Dorsolateral prefrontal cortex (tissue), 120 donors: ENCODE measurements at regions of chr2 and their contacts with region 1.

Region 1: GRCh38 chr2:20578895-20579825 is 71.7 kb downstream of the HS1BP3 start:
- DNase-seq: peak; percentile 53 to 87 (median 78)
- H3K4me3 ChIP-seq: peak overlapping the region in 8 of 59 donors; percentile 9 to 32 (median 20)
- H3K27ac ChIP-seq: peak overlapping the region; percentile 1 to 90 (median 76)
- H3K27me3 ChIP-seq: no peaks in the 10 kb centered on the region
- CTCF ChIP-seq: peak in 4 of 56 donors; percentile 9 to 29 (median 12)

Region 2: DNA sequence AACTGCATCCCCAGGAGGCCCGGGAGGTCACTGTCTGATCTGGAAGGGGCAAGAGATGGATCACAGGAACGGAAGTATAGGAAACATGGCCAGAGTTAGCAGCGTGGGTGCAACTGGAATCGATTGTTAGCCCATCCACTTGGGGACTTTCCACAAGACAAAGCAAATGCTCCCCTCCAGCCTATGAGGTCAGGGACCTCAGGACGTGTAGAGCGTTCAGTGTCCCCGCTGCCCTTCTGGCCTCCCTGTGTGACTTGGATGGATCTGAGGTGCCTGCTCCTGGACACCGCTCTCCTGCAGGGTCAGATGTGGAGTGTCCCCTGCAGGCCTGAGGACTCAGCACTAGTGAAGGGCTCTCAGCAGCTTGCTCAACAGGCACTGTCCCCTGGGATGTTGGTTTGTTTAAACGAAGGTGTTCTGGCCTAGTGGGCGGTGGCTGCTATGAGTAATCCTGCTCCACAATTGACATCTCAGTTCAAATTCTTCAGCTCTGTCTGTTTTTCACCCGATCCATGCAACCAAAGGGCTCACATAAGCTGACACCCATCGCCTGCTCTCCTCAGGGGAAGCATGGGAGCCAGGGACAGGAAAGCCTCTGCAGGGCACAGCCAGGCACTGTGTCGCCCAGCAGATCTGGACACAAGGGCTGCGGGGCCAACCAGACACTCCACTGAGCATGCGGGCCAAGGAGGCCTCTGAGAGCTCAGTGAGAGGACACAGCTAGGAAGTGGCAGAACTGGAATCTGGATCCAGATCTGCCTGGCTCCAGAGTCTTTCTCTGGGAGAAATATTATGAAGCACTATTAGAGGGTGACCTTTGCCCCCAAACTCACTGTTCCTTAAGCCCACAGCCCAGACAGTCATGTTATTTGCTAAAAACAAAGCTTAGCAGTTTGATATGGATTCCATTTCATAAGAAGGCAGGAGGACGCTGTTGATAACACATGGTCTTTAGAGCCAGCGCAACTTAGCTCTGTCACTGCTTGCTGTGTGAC is 53.8 kb before region 1 on chr2:
- intact Hi-C with region 1: loop called in 1 of 2 experiments (anchors 2 kb)
- DNase-seq: no peak
- H3K4me3 ChIP-seq: peak overlapping the region in 2 of 59 donors; percentile 4 to 20
- H3K27ac ChIP-seq: peak overlapping the region in 57 of 59 donors; percentile 6 to 85 (median 68)
- H3K27me3 ChIP-seq: no peaks in the 10 kb centered on the region
- CTCF ChIP-seq: peak in 6 of 56 donors; percentile 4 to 19 (median 12)